ENCODE measurements at regions of chr6 and their contacts with region 1.

Region 1: GRCh38 chr6:30914076-30914853 is at the start of gene VARS2:
- DNase-seq: peak; percentile 99
- H3K4me3 ChIP-seq: peak within 1 kb of the TSS; percentile 56 to 66
- H3K27ac ChIP-seq: peak within 1 kb of the TSS; percentile 79 to 87
- H3K4me1 ChIP-seq: peaks cover 9 to 18% of the 10 kb centered on the region in 2 experiments; a peak in 3 of 4 replicates
- H3K27me3 ChIP-seq: no peaks in the 10 kb centered on the region
- CTCF ChIP-seq: peak; percentile 36; the same call in 1 of the 2 replicates
- EP300 ChIP-seq: no peak
- RAD21 ChIP-seq: peak; percentile 38
- polyA plus RNA-seq, gene VARS2: 31.2 TPM in 2 replicates

Region 2: DNA sequence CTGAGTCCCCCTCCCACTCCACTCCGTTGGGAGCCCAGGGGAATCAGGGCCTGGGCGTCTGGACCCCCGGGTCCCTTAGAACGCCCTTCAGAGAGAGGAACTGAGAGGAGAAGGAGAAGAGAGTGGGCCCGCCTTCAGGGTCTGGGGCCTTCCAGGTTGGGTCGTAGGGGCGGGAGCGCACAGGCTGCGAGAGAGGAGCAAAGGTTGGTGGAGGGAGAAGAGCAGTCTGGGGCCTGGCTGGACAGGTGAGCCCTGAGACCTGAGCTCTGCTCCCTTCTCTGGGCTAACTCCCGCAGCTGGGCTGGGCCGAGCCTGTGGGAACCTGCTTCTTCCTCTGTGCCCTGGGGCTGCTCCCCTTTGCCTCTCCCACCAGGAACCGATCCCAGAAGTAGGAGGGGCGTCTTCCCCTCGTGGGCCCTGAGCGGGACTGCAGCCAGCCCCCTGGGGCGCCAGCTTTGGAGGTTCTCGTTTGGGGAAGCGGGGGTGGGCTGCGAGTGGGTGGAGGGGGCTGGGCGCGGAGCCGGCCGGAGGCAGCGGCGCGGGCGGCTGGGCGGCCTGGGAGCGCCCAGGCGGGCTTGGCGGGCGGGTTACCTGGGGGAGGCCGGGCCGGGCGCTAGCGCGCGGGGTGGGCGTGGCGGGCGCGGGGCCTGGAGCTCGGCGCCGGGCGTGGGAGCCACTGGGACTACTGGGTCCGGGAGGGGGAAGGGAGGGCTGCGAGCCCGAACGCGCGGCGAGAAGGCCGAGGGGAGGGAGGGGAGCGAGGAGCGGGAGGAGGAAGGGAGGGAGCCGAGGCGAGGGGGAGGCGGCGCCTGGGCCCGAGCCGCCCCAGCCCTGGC is 30.4 kb before region 1 on chr6 and contains the start of gene DDR1:
- CTCF ChIA-PET with region 1: interaction called, 29 read pairs
- POLR2A ChIA-PET with region 1: interaction called, 7 read pairs
- DNase-seq: peak; percentile 91
- H3K4me3 ChIP-seq: peak within 1 kb of the TSS; percentile 62 to 69
- H3K27ac ChIP-seq: peak within 1 kb of the TSS; percentile 51 to 83; a peak in 3 of 4 replicates
- H3K4me1 ChIP-seq: peaks cover 20 to 31% of the 10 kb centered on the region in 2 experiments; a peak in 3 of 4 replicates
- H3K27me3 ChIP-seq: no peaks in the 10 kb centered on the region
- CTCF ChIP-seq: no peak
- EP300 ChIP-seq: no peak
- RAD21 ChIP-seq: no peak
- polyA plus RNA-seq, gene DDR1: 40.2 and 52.8 TPM in 2 replicates

Region 3: DNA sequence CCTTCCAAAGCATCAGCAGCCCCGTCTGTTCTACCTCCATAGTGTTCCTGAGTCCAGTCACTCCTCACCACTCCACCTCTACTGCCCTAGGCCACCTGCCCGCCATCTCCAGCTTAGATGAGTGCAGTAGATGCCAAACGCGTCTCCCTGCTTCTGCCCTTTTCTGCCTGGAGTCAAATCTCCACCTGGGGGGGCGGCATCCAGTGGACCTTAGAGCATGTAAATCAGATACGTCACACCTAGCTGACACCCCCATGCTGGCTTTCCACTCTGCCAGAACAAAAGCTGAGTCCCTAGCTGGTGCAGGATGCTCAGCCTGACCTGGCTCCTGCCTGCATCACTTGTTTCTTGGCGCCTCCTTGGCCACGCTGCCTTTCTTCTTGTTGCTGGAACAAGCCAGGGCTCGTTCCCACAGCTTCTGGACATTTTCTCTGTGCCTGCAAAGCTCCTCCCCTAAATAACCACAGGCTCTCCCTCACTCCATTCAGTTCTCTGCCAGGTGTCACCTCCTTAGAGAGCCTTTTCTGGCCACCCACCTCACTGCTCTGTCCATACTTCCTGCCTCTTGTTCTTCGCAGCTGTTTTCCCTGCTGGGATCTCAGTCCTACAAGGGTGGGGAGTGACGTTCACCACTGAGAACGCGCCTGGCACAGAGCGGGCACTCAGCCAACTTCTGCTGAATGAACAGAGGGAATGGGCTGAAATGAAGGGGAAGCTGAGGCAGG is 24.2 kb before region 1 on chr6:
- CTCF ChIA-PET with region 1: interaction called, 11 read pairs
- POLR2A ChIA-PET with region 1: no interaction called
- DNase-seq: peak; percentile 32
- H3K4me3 ChIP-seq: no peak overlapping the region
- H3K27ac ChIP-seq: no peak overlapping the region; a peak in 1 of 4 replicates
- H3K4me1 ChIP-seq: peaks cover 20 to 26% of the 10 kb centered on the region in 2 experiments; a peak in 3 of 4 replicates
- H3K27me3 ChIP-seq: no peaks in the 10 kb centered on the region
- CTCF ChIP-seq: no peak
- EP300 ChIP-seq: no peak
- RAD21 ChIP-seq: no peak

Region 4: DNA sequence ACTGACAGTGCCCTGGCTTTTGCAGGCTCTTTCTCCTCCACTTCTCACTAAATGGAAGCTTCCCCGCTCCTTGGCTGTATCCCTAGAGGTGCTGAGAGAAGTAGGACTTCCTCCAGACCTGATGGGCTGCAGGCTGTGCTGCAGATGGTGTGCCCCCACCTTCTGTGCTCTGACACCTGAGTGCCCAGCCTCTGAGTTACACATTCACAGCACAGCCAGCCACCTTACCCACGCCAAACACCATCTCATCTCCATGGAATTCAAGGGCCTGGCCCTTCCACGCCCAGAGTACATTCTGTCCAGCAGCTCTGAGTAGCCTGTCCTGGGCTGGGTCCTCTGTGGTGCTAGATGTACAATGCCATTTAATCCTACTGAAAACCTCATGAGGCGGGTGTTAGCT is 12.4 kb after region 1 on chr6:
- CTCF ChIA-PET with region 1: interaction called, 15 read pairs
- POLR2A ChIA-PET with region 1: no interaction called
- DNase-seq: no peak
- H3K4me3 ChIP-seq: no peak overlapping the region
- H3K27ac ChIP-seq: no peak overlapping the region
- H3K4me1 ChIP-seq: no peaks in the 10 kb centered on the region
- H3K27me3 ChIP-seq: no peaks in the 10 kb centered on the region
- CTCF ChIP-seq: no peak
- EP300 ChIP-seq: no peak
- RAD21 ChIP-seq: no peak

Region 5: GRCh38 chr6:31068669-31069340 is 154.5 kb after region 1 on chr6:
- CTCF ChIA-PET with region 1: interaction called, 29 read pairs
- POLR2A ChIA-PET with region 1: no interaction called
- DNase-seq: peak; percentile 86
- H3K4me3 ChIP-seq: no peak overlapping the region; a peak in 1 of 4 replicates
- H3K27ac ChIP-seq: no peak overlapping the region
- H3K4me1 ChIP-seq: peaks cover 6 to 13% of the 10 kb centered on the region in 2 experiments; a peak in 3 of 4 replicates
- H3K27me3 ChIP-seq: no peaks in the 10 kb centered on the region
- CTCF ChIP-seq: peak; percentile 90
- EP300 ChIP-seq: no peak
- RAD21 ChIP-seq: peak; percentile 65